ENCODE measurements at regions of chr1 and their contacts with region 1.

Region 1: GRCh38 chr1:32179443-32180185 is at the start of gene TXLNA:
- DNase-seq: peak; percentile 66 to 93 (median 88)
- ATAC-seq: peak; percentile 88
- H3K4me3 ChIP-seq: peak within 1 kb of the TSS; percentile 67 to 85
- H3K4me3 Mint-ChIP-seq: peak within 1 kb of the TSS; percentile 84
- H3K27ac ChIP-seq: peak within 1 kb of the TSS; percentile 70 to 89
- H3K27ac Mint-ChIP-seq: peak within 1 kb of the TSS; percentile 93
- H3K4me1 ChIP-seq: peaks cover 26% of the 10 kb centered on the region
- H3K4me1 Mint-ChIP-seq: peaks cover 44% of the 10 kb centered on the region
- H3K27me3 ChIP-seq: no peaks in the 10 kb centered on the region
- H3K27me3 Mint-ChIP-seq: no peaks in the 10 kb centered on the region
- CTCF ChIP-seq: no peak
- total RNA-seq, gene TXLNA: 7.5 to 8.9 TPM

Region 2: GRCh38 chr1:32107742-32108661 is 71.6 kb before region 1 on chr1 and contains the start of gene KPNA6:
- CTCF ChIA-PET with region 1: interaction called, 3 read pairs
- POLR2A ChIA-PET with region 1: interaction called, 9 read pairs
- intact Hi-C with region 1: loop called (anchors 1 kb)
- DNase-seq: peak; percentile 83 to 98 (median 90)
- ATAC-seq: peak; percentile 89
- H3K4me3 ChIP-seq: peak within 1 kb of the TSS; percentile 87 to 95
- H3K4me3 Mint-ChIP-seq: peak within 1 kb of the TSS; percentile 98
- H3K27ac ChIP-seq: peak within 1 kb of the TSS; percentile 84 to 93
- H3K27ac Mint-ChIP-seq: peak within 1 kb of the TSS; percentile 98
- H3K4me1 ChIP-seq: peaks cover 45% of the 10 kb centered on the region
- H3K4me1 Mint-ChIP-seq: peaks cover 50% of the 10 kb centered on the region
- H3K27me3 ChIP-seq: no peaks in the 10 kb centered on the region
- H3K27me3 Mint-ChIP-seq: no peaks in the 10 kb centered on the region
- CTCF ChIP-seq: no peak
- total RNA-seq, gene KPNA6: 51.7 to 58.7 TPM

Region 3: GRCh38 chr1:32200226-32201010 is 20.8 kb after region 1 on chr1 and contains the start of gene CCDC28B:
- CTCF ChIA-PET with region 1: no interaction called
- POLR2A ChIA-PET with region 1: interaction called, 12 read pairs
- intact Hi-C with region 1: loop called (anchors 1 kb)
- DNase-seq: peak in 8 of 9 experiments; percentile 32 to 81 (median 64)
- ATAC-seq: peak; percentile 49
- H3K4me3 ChIP-seq: peak within 1 kb of the TSS; percentile 69 to 70
- H3K4me3 Mint-ChIP-seq: peak within 1 kb of the TSS; percentile 85
- H3K27ac ChIP-seq: peak within 1 kb of the TSS; percentile 75 to 78
- H3K27ac Mint-ChIP-seq: peak within 1 kb of the TSS; percentile 97
- H3K4me1 ChIP-seq: peaks cover 46% of the 10 kb centered on the region
- H3K4me1 Mint-ChIP-seq: peaks cover 59% of the 10 kb centered on the region
- H3K27me3 ChIP-seq: no peaks in the 10 kb centered on the region
- H3K27me3 Mint-ChIP-seq: no peaks in the 10 kb centered on the region
- CTCF ChIP-seq: no peak
- total RNA-seq, gene CCDC28B: 3.8 to 5.2 TPM

Region 4: GRCh38 chr1:32351399-32352238 is 172.0 kb after region 1 on chr1:
- CTCF ChIA-PET with region 1: no interaction called
- POLR2A ChIA-PET with region 1: no interaction called
- intact Hi-C with region 1: loop called in 1 of 2 experiments (anchors 1 kb)
- DNase-seq: peak; percentile 81 to 97 (median 90)
- ATAC-seq: peak; percentile 95
- H3K4me3 ChIP-seq: peak overlapping the region; percentile 57 to 85
- H3K4me3 Mint-ChIP-seq: peak overlapping the region; percentile 81
- H3K27ac ChIP-seq: peak overlapping the region; percentile 60 to 69
- H3K27ac Mint-ChIP-seq: peak overlapping the region; percentile 49
- H3K4me1 ChIP-seq: peaks cover 30% of the 10 kb centered on the region
- H3K4me1 Mint-ChIP-seq: peaks cover 49% of the 10 kb centered on the region
- H3K27me3 ChIP-seq: no peaks in the 10 kb centered on the region
- H3K27me3 Mint-ChIP-seq: no peaks in the 10 kb centered on the region
- CTCF ChIP-seq: no peak